ENCODE measurements at regions of chrX and their contacts with region 1.

Region 1: DNA sequence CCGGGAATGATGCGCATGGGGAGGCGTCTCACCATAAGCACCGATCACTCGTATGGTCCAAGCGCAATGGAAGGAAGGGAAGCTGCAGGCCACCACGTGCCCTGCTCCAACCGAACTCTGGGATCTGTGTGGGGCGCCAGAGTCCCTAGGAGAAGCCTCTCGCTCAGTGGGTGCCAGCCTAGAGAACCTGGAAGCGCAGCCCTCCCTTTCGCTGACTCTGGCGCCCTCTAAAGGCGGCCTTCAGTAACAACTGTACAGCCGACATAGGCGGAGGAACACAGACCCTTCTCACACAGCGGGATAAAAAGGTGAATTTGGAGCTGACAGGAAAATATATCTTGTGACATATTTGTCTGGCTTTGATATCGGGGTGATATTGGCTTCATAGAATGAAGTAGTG is 76.0 kb downstream of the INTS6L start:
- DNase-seq: peak; percentile 60
- H3K4me3 ChIP-seq: 0 out of 4 replicates have a peak overlapping the region, but pooled peaks of 1 of the 2 experiments have one; percentile 18
- H3K27ac ChIP-seq: no peak overlapping the region
- H3K4me1 ChIP-seq: no peaks in the 10 kb centered on the region; a peak in 1 of 4 replicates
- H3K27me3 ChIP-seq: no peaks in the 10 kb centered on the region; the same call in 1 of the 2 replicates
- CTCF ChIP-seq: peak; percentile 74
- EP300 ChIP-seq: no peak
- RAD21 ChIP-seq: peak; percentile 79

Region 2: GRCh38 chrX:135050603-135051002 is 545.9 kb before region 1 on chrX:
- CTCF ChIA-PET with region 1: no interaction called
- POLR2A ChIA-PET with region 1: no interaction called
- DNase-seq: no peak
- H3K4me3 ChIP-seq: peak overlapping the region; percentile 56 to 68
- H3K27ac ChIP-seq: no peak overlapping the region; a peak in 1 of 4 replicates
- H3K4me1 ChIP-seq: peaks cover 0 to 3% of the 10 kb centered on the region in 2 experiments; a peak in 3 of 4 replicates
- H3K27me3 ChIP-seq: no peaks in the 10 kb centered on the region
- CTCF ChIP-seq: no peak
- EP300 ChIP-seq: no peak
- RAD21 ChIP-seq: no peak

Region 3: DNA sequence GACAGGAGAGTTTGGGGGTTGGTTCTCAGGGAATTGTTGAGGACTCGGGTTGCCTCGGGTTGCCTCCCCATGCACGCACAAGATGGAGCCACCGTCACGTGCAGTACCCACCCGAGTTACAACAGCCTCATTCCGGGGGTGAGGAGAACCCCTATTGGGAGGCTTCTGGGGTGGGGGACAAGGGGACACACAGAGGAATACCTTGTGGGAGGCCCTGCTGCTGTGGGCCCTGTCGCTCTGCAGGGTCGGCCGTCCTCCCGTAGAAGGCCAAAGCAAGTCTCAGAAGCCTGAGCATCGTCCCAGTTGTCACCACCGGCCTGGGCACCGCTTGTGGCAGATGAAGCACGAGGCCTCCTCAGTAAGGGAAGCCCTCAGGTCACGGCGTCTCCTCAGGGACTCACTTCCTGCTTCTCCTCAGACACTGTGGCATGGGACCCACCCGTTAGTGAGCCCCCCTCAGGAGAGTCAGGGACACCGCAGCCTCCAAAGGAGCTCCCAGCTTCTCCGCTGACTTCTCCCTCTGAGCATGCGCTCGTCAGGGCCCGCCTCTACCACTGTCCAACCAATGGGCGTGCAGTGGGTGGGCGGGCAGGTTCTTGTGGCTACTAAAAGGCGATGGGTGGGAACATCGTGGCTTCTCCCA is 425.5 kb before region 1 on chrX and contains the start of gene CT55:
- CTCF ChIA-PET with region 1: no interaction called
- POLR2A ChIA-PET with region 1: no interaction called
- DNase-seq: peak; percentile 31
- H3K4me3 ChIP-seq: no peak within 1 kb of the TSS
- H3K27ac ChIP-seq: no peak within 1 kb of the TSS
- H3K4me1 ChIP-seq: no peaks in the 10 kb centered on the region
- H3K27me3 ChIP-seq: no peaks in the 10 kb centered on the region
- CTCF ChIP-seq: no peak
- EP300 ChIP-seq: no peak
- RAD21 ChIP-seq: no peak
- polyA plus RNA-seq, gene CT55: 1.5 and 1.9 TPM in 2 replicates

Region 4: GRCh38 chrX:135484641-135485289 is 111.7 kb before region 1 on chrX:
- CTCF ChIA-PET with region 1: interaction called, 18 read pairs
- POLR2A ChIA-PET with region 1: no interaction called
- DNase-seq: peak; percentile 21
- H3K4me3 ChIP-seq: no peak overlapping the region
- H3K27ac ChIP-seq: no peak overlapping the region
- H3K4me1 ChIP-seq: no peaks in the 10 kb centered on the region
- H3K27me3 ChIP-seq: no peaks in the 10 kb centered on the region; the same call in 1 of the 2 replicates
- CTCF ChIP-seq: peak; percentile 65
- EP300 ChIP-seq: no peak
- RAD21 ChIP-seq: peak; percentile 85

Region 5: DNA sequence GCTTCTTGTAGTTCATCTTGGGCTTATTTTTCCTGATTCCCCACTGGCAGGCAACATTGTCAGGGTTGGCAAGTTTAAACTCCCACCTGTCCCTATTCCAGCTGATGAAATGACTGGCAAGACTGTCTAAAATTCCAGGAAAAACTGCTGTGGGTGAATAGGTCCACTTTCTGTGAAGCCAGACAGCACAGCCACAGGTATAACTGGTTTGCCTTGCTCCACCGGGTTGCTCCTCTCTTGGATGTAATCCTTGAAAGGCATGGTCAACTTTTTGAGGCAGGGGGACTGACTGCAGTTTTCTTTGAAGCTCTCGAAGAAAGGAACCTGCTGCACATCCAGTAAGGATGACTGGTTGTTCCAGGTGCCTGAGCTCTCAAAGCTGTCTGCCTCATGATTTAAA is 12.7 kb before region 1 on chrX:
- CTCF ChIA-PET with region 1: interaction called, 12 read pairs
- POLR2A ChIA-PET with region 1: no interaction called
- DNase-seq: no peak
- H3K4me3 ChIP-seq: no peak overlapping the region
- H3K27ac ChIP-seq: no peak overlapping the region
- H3K4me1 ChIP-seq: no peaks in the 10 kb centered on the region
- H3K27me3 ChIP-seq: no peaks in the 10 kb centered on the region; the same call in 1 of the 2 replicates
- CTCF ChIP-seq: no peak
- EP300 ChIP-seq: no peak
- RAD21 ChIP-seq: no peak

Region 6: DNA sequence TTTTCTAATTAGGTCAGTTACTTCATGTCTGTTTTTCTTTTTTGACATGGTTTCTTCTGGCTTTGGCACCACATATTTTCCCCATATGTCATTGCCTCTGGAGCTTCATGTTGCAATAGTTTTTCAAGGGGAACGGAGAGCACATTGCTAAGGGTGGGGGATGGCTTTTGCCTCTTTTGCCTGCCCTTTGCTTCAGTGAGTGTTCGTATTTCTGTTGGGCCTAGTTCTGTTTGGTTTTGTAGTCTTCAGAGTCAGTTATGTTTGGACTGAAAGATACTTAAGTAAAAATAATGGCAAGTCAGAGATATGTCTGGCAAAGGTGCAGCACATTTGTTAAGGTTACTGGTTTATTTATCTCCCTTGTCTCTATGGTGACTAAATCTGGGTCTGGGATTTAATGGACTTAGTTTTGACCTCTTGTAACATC is 579.9 kb after region 1 on chrX:
- CTCF ChIA-PET with region 1: no interaction called
- POLR2A ChIA-PET with region 1: no interaction called
- DNase-seq: no peak
- H3K4me3 ChIP-seq: no peak overlapping the region
- H3K27ac ChIP-seq: peak overlapping the region; percentile 47 to 89
- H3K4me1 ChIP-seq: peaks cover 0 to 7% of the 10 kb centered on the region in 2 experiments; a peak in 3 of 4 replicates
- H3K27me3 ChIP-seq: no peaks in the 10 kb centered on the region
- CTCF ChIP-seq: no peak
- EP300 ChIP-seq: peak in 1 of 2 experiments; percentile 65; a peak in 1 of 4 replicates
- RAD21 ChIP-seq: no peak